ENCODE measurements at regions of chr4 and their contacts with region 1.

Region 1: GRCh38 chr4:48578132-48578968 is 88.3 kb downstream of the ZAR1 start:
- DNase-seq: peak; percentile 47
- ATAC-seq: peak; percentile 85
- H3K4me3 Mint-ChIP-seq: no peak overlapping the region
- H3K27ac Mint-ChIP-seq: no peak overlapping the region
- H3K4me1 Mint-ChIP-seq: no peaks in the 10 kb centered on the region
- H3K27me3 Mint-ChIP-seq: no peaks in the 10 kb centered on the region
- CTCF ChIP-seq: peak; percentile 80

Region 2: DNA sequence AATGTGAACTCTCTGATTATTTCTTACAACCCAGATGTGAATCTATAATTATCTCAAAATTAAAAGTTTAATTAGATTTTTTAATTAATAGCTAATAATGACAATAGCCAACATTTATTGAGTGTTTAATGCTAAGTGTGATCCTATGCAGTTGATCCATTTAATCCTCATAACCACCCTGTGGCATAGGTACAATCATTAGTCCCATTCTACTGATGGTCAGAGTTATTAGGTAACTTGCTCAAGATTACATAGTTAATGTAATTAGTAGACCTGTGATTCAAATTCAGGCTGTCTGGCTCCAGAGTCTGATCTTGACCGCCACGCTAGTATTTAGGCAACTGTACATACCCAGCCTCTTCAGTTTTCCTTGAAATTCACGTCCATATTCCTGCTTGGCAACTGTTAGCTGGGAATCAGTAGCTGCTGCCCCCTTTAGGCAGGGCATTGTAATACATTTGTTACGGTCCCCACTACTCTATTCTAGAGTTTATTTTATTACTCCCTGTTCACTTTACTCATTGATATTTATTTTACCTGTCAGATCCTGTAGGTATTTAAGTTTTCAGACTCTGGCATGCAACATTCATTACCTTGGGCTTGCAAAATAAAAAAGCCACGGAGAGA is 288.1 kb before region 1 on chr4:
- CTCF ChIA-PET with region 1: no interaction called
- POLR2A ChIA-PET with region 1: no interaction called
- DNase-seq: peak; percentile 39
- ATAC-seq: peak; percentile 75
- H3K4me3 Mint-ChIP-seq: no peak overlapping the region
- H3K27ac Mint-ChIP-seq: no peak overlapping the region
- H3K4me1 Mint-ChIP-seq: peaks cover 6% of the 10 kb centered on the region
- H3K27me3 Mint-ChIP-seq: no peaks in the 10 kb centered on the region; the same call in 1 of the 2 replicates
- CTCF ChIP-seq: peak; percentile 54; the same call in 1 of the 2 replicates

Region 3: GRCh38 chr4:48557478-48557877 is 20.9 kb before region 1 on chr4:
- CTCF ChIA-PET with region 1: interaction called, 14 read pairs
- POLR2A ChIA-PET with region 1: no interaction called
- DNase-seq: peak; percentile 20
- ATAC-seq: peak; percentile 65
- H3K4me3 Mint-ChIP-seq: no peak overlapping the region
- H3K27ac Mint-ChIP-seq: no peak overlapping the region
- H3K4me1 Mint-ChIP-seq: no peaks in the 10 kb centered on the region
- H3K27me3 Mint-ChIP-seq: no peaks in the 10 kb centered on the region
- CTCF ChIP-seq: peak; percentile 21; the same call in 1 of the 2 replicates

Region 4: GRCh38 chr4:48594180-48594579 is 15.8 kb after region 1 on chr4:
- CTCF ChIA-PET with region 1: interaction called, 10 read pairs
- POLR2A ChIA-PET with region 1: interaction called, 3 read pairs
- DNase-seq: peak; percentile 16
- ATAC-seq: peak; percentile 91
- H3K4me3 Mint-ChIP-seq: peak overlapping the region; percentile 2; the same call in 1 of the 2 replicates
- H3K27ac Mint-ChIP-seq: 0 out of 2 replicates have a peak overlapping the region, but pooled peaks have one; percentile 46
- H3K4me1 Mint-ChIP-seq: peaks cover 19% of the 10 kb centered on the region
- H3K27me3 Mint-ChIP-seq: no peaks in the 10 kb centered on the region
- CTCF ChIP-seq: no peak

Region 5: GRCh38 chr4:48779998-48780742 is 201.8 kb after region 1 on chr4 and contains the start of gene FRYL:
- CTCF ChIA-PET with region 1: interaction called, 23 read pairs
- POLR2A ChIA-PET with region 1: no interaction called
- DNase-seq: peak; percentile 99
- ATAC-seq: peak; percentile 95
- H3K4me3 Mint-ChIP-seq: peak within 1 kb of the TSS; percentile 94
- H3K27ac Mint-ChIP-seq: peak within 1 kb of the TSS; percentile 98
- H3K4me1 Mint-ChIP-seq: peaks cover 44% of the 10 kb centered on the region
- H3K27me3 Mint-ChIP-seq: no peaks in the 10 kb centered on the region
- CTCF ChIP-seq: no peak
- total RNA-seq, gene FRYL: 33.1 to 38.7 TPM (median 36.9 TPM) in 3 replicates